ENCODE measurements at regions of chr12 and their contacts with region 1.

Region 1: GRCh38 chr12:45388545-45388944 is 172.7 kb downstream of the ANO6 start:
- DNase-seq: peak in 3 of 5 donors; percentile 29 to 77 (median 61)
- H3K4me3 ChIP-seq: no peak overlapping the region
- H3K27ac ChIP-seq: no peak overlapping the region
- H3K4me1 ChIP-seq: no peaks in the 10 kb centered on the region
- H3K27me3 ChIP-seq: no peaks in the 10 kb centered on the region
- CTCF ChIP-seq: peak; percentile 65

Region 2: GRCh38 chr12:44852483-44852882 is 536.1 kb before region 1 on chr12:
- intact Hi-C with region 1: no loop called
- DNase-seq: peak in 1 of 5 donors; percentile 11
- H3K4me3 ChIP-seq: no peak overlapping the region
- H3K27ac ChIP-seq: no peak overlapping the region
- H3K4me1 ChIP-seq: no peaks in the 10 kb centered on the region
- H3K27me3 ChIP-seq: no peaks in the 10 kb centered on the region
- CTCF ChIP-seq: no peak

Region 3: DNA sequence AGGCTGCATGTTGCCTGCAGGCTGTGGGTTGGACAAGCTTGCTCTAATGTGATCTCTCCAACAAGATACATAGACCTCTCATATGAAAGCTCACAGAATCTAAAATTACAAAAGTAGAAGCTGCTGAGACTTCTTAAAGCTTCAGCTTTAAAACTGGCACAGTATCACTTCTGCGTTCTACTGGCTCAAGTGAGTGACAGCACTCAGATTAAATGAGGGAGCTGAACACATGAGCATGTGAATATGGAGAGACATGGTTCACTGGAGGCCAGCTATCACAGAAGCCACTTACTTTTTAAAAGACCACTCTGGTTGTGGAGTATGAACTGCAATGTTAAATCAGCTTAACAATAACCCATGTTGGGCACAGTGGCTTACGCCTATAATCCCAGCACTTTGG is 201.8 kb before region 1 on chr12:
- intact Hi-C with region 1: loop called (anchors 5 kb)
- DNase-seq: no peak
- H3K4me3 ChIP-seq: no peak overlapping the region
- H3K27ac ChIP-seq: no peak overlapping the region
- H3K4me1 ChIP-seq: no peaks in the 10 kb centered on the region
- H3K27me3 ChIP-seq: no peaks in the 10 kb centered on the region
- CTCF ChIP-seq: no peak

Measured in kidney (tissue), 22 donors.